ENCODE measurements at regions of chr1 and their contacts with region 1.

Region 1: DNA sequence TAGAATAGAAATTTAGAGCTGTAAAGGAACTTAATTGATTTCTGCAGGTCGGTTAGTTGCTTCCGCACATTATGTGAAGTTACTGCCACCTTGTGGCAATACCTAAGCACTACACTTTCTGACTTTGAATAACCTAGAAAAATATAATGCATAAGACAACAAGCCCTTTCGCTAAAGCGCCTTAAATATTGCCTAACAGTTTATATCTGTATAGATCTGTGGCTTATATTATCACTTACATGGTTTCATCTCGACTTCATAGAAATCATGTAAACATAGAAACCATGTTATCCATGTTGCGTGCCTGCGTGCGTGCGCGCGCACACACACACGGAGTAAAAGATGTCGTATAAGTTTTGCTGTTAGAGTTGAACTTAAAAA is 10.9 kb upstream of the IFI16 start:
- DNase-seq: peak; percentile 87
- H3K4me3 ChIP-seq: peak overlapping the region; percentile 36 to 78 (median 57)
- H3K27ac ChIP-seq: peak overlapping the region; percentile 85
- H3K4me1 ChIP-seq: peaks cover 26% of the 10 kb centered on the region
- H3K27me3 ChIP-seq: peaks cover 2% of the 10 kb centered on the region in 2 experiments
- CTCF ChIP-seq: peak; percentile 62 to 69
- POLR2A ChIP-seq: no peak

Region 2: DNA sequence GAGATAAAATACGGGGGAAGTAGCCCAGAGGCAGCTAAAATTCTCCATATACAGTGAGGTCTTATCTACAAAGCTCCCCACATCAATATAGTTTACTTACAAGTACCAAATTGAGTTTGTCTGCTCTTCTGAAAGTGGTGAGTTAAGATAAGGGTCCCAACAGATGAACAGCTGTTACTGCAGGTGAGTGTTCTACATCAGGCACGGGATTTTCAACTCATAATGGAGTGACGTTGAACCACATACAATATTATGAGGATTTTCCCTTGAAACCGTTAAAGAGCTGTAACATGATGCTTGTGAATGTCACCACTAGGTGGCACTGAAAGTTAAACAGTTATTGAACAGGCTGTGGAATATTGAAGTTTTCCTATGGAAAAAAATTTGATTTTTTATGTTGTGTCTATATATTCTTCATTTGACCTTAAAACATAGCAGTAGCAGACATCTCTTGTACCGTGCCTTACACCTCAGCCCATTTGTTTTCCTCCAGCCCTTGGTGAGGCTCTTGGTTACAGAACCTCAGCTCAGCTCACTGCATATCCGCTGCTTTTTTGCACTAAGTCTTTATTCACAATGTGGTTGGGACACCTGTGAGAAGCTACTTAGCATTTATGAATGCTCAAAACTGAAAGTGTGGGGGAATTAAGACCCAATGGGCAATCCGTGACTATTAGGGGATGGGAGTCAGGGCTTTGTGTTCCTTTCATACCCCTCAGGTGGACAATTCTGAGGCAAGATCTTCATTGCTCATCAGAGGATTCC is 794.9 kb before region 1 on chr1:
- CTCF ChIA-PET with region 1: interaction called, 96 read pairs
- POLR2A ChIA-PET with region 1: interaction called, 4 read pairs
- dilution Hi-C with region 1: no loop called
- intact Hi-C with region 1: loop called (anchors 1 kb)
- DNase-seq: peak; percentile 70
- H3K4me3 ChIP-seq: no peak overlapping the region
- H3K27ac ChIP-seq: no peak overlapping the region
- H3K4me1 ChIP-seq: peaks cover 5% of the 10 kb centered on the region
- H3K27me3 ChIP-seq: peaks cover 0 to 16% of the 10 kb centered on the region in 2 experiments
- CTCF ChIP-seq: peak; percentile 59 to 63
- POLR2A ChIP-seq: no peak

Region 3: GRCh38 chr1:158793604-158794003 is 205.2 kb before region 1 on chr1:
- CTCF ChIA-PET with region 1: interaction called, 5 read pairs
- POLR2A ChIA-PET with region 1: no interaction called
- dilution Hi-C with region 1: no loop called
- intact Hi-C with region 1: loop called (anchors 1 kb)
- DNase-seq: peak; percentile 2
- H3K4me3 ChIP-seq: no peak overlapping the region
- H3K27ac ChIP-seq: no peak overlapping the region
- H3K4me1 ChIP-seq: no peaks in the 10 kb centered on the region
- H3K27me3 ChIP-seq: no peaks in the 10 kb centered on the region
- CTCF ChIP-seq: peak in 1 of 2 donors; percentile 14
- POLR2A ChIP-seq: no peak

Region 4: GRCh38 chr1:159015440-159015909 is 16.7 kb after region 1 on chr1:
- CTCF ChIA-PET with region 1: interaction called, 18 read pairs
- POLR2A ChIA-PET with region 1: interaction called, 12 read pairs
- dilution Hi-C with region 1: no loop called
- intact Hi-C with region 1: loop called (anchors 1 kb)
- DNase-seq: peak; percentile 94
- H3K4me3 ChIP-seq: peak overlapping the region in 1 of 3 experiments; percentile 13
- H3K27ac ChIP-seq: peak overlapping the region; percentile 74
- H3K4me1 ChIP-seq: peaks cover 51% of the 10 kb centered on the region
- H3K27me3 ChIP-seq: no peaks in the 10 kb centered on the region
- CTCF ChIP-seq: no peak
- POLR2A ChIP-seq: peak; percentile 78